ENCODE measurements at regions of chr9 and their contacts with region 1.

Region 1: DNA sequence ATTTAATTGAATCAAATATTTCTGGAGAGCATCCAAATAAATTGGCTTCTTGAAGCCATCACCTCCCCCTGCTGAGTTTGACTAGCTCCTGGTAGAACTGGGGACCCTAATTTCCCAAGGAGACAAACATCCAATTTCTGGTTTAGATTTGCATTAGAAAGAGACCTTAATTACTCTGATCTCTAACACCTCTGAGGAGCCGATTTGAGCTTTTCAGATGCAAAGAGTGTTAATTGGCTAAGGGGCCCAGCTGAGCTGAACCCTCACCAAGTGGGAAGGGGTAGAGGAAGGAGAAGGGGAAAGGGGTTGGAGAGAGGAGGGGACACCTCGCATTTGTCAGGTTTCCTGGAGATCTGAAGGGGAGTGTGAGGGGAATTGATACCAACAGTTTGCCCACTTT is 145.4 kb upstream of the SHB start:
- DNase-seq: no peak
- ATAC-seq: no peak
- H3K4me3 ChIP-seq: no peak overlapping the region
- H3K4me1 ChIP-seq: no peaks in the 10 kb centered on the region
- CTCF ChIP-seq: no peak

Region 2: DNA sequence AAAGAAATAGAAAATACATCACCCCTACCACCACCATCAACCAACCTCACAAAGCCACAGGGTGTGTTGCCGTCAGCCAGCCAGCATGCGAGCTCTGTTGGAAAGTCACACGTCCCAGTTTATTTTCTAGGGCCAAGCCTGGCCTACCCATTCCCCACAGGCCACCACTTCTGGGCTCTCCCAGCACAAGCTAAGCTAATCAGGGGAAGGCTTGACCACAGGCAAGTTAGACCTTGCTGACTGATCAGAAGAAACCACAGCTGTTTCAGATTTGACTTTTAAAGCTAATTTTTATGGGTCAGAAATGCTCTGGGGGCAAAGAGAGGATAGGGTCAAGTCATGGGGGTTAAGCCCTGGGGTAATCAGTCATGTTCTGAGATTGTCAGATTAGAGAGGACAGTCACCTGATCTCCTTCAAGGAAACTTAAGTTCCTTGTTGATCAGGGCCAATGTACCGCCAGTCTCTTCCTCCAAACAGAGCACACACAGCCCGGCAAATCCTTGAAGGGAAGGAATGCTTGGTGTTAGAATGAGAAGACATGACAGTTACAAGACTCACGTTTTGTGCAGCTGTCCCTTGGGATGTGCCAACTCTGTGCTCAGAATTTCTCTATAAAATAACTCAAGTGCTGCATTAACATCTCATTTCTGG is 153.0 kb before region 1 on chr9:
- intact Hi-C with region 1: no loop called
- DNase-seq: no peak
- ATAC-seq: no peak
- H3K4me3 ChIP-seq: no peak overlapping the region
- H3K4me1 ChIP-seq: peaks cover 25% of the 10 kb centered on the region
- CTCF ChIP-seq: no peak

Region 3: GRCh38 chr9:38277601-38278200 is 63.3 kb after region 1 on chr9:
- intact Hi-C with region 1: loop called in 1 of 2 experiments (anchors 10 kb)
- DNase-seq: peak; percentile 35 to 56 (median 48)
- ATAC-seq: peak; percentile 74
- H3K4me3 ChIP-seq: no peak overlapping the region
- H3K4me1 ChIP-seq: no peaks in the 10 kb centered on the region
- CTCF ChIP-seq: no peak

Measured in mucosa of descending colon (tissue), 3 donors.